Common myeloid progenitor, CD34-positive (primary cell): ENCODE measurements at regions of chr13 and their contacts with region 1.

Region 1: GRCh38 chr13:99176309-99177276 is 24.1 kb upstream of the UBAC2 start:
- DNase-seq: peak; percentile 60 to 78 (median 71)
- H3K4me3 ChIP-seq: peak overlapping the region in 2 of 7 experiments; percentile 44 to 46
- H3K27ac ChIP-seq: no peak overlapping the region
- H3K4me1 ChIP-seq: peaks cover 0 to 6% (median 4%) of the 10 kb centered on the region in 4 experiments
- H3K27me3 ChIP-seq: peaks cover 0 to 18% (median 5%) of the 10 kb centered on the region in 5 experiments

Region 2: GRCh38 chr13:99165753-99166587 is 10.6 kb before region 1 on chr13:
- CTCF ChIA-PET with region 1: interaction called, 13 read pairs
- POLR2A ChIA-PET with region 1: no interaction called
- DNase-seq: peak in 2 of 3 donors; percentile 27 to 36
- H3K4me3 ChIP-seq: no peak overlapping the region
- H3K27ac ChIP-seq: no peak overlapping the region
- H3K4me1 ChIP-seq: no peaks in the 10 kb centered on the region
- H3K27me3 ChIP-seq: peaks cover 0 to 18% (median 0%) of the 10 kb centered on the region in 5 experiments

Region 3: DNA sequence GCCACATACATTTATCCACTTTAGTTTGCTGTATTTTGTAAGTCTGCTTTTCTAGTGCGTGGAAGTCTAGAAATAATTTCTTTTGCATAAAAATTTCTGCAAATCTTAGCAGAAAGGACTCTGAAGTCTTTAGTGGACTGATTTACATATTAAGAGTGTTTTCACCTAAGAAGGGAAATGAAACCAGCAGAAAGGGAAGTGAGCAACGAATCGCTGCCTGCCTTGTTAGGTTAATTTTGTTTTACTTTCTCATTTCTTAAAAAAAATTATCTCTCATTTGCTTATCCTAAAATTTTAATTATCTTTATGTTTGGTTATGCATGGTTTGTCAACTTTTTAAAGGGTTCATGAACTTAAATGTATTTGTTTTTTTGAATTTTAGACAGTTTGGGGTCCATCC is 82.4 kb after region 1 on chr13:
- CTCF ChIA-PET with region 1: interaction called, 179 read pairs
- POLR2A ChIA-PET with region 1: interaction called, 3 read pairs
- DNase-seq: peak; percentile 41 to 85 (median 77)
- H3K4me3 ChIP-seq: peak overlapping the region in 6 of 7 experiments; percentile 11 to 63 (median 20)
- H3K27ac ChIP-seq: peak overlapping the region; percentile 41 to 67
- H3K4me1 ChIP-seq: peaks cover 21 to 44% (median 27%) of the 10 kb centered on the region in 4 experiments
- H3K27me3 ChIP-seq: no peaks in the 10 kb centered on the region